Dorsolateral prefrontal cortex (tissue), 120 donors: ENCODE measurements at regions of chr1 and their contacts with region 1.

Region 1: DNA sequence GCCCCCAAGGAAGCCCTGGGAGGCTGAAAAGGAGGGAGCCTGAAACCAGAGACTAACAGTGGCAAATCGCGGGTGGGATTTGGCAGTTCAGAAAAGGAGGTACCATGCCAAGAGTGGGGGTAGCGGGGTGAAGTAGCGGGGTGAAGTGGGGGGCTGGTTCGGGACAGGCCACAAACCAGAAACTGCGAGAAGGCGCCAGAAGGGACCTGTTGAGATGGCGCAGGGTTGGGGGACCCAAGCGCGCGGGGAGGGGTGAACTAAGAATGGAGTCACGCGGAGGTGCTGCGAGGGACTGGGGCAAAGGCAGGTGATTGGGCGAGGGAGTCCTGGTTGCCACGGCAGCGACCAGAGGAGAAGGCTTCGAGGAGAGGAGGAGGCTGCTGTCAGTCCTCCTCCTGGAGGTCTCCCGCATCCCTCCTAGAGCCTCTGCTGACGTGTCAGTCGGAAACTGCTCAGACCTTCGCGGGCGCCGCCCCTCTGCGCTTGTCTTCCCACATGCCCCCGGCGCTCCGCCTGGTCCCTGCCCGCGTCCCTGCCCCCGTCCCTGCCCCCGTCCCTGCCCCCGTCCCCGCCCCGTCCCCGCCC is 438 bp upstream of the MIA3 start:
- DNase-seq: peak; percentile 73 to 95 (median 90)
- H3K4me3 ChIP-seq: peak overlapping the region; percentile 52 to 99 (median 76)
- H3K27ac ChIP-seq: peak overlapping the region in 53 of 59 donors; percentile 19 to 88 (median 75)
- H3K27me3 ChIP-seq: no peaks in the 10 kb centered on the region
- CTCF ChIP-seq: no peak

Region 2: GRCh38 chr1:222557148-222557547 is 60.3 kb before region 1 on chr1:
- intact Hi-C with region 1: no loop called
- DNase-seq: no peak
- H3K4me3 ChIP-seq: no peak overlapping the region
- H3K27ac ChIP-seq: no peak overlapping the region
- H3K27me3 ChIP-seq: no peaks in the 10 kb centered on the region
- CTCF ChIP-seq: no peak

Region 3: GRCh38 chr1:222589462-222590302 is 27.8 kb before region 1 on chr1 and contains the start of gene TAF1A:
- intact Hi-C with region 1: loop called in 1 of 2 experiments (anchors 2 kb)
- DNase-seq: peak; percentile 71 to 90 (median 87)
- H3K4me3 ChIP-seq: peak within 1 kb of the TSS; percentile 45 to 94 (median 81)
- H3K27ac ChIP-seq: peak within 1 kb of the TSS in 54 of 59 donors; percentile 1 to 90 (median 75)
- H3K27me3 ChIP-seq: no peaks in the 10 kb centered on the region
- CTCF ChIP-seq: peak in 18 of 56 donors; percentile 6 to 37 (median 16)
- total RNA-seq, gene TAF1A: 5.4 to 15.0 (median 8.7) TPM